Activated CD4-positive, alpha-beta memory T cell treated with anti-CD3 and anti-CD28 coated beads, Interleukin-2, amount 10 ng/mL, durations not matched to agents 7 days and 5 days (primary cell): ENCODE measurements at regions of chr1 and their contacts with region 1.

Region 1: GRCh38 chr1:66300972-66301451 is 232.9 kb upstream of the SGIP1 start:
- DNase-seq: peak; percentile 53
- H3K4me3 Mint-ChIP-seq: peak overlapping the region; percentile 76
- H3K27ac Mint-ChIP-seq: peak overlapping the region; percentile 85
- H3K4me1 Mint-ChIP-seq: peaks cover 49% of the 10 kb centered on the region
- H3K27me3 Mint-ChIP-seq: no peaks in the 10 kb centered on the region

Region 2: DNA sequence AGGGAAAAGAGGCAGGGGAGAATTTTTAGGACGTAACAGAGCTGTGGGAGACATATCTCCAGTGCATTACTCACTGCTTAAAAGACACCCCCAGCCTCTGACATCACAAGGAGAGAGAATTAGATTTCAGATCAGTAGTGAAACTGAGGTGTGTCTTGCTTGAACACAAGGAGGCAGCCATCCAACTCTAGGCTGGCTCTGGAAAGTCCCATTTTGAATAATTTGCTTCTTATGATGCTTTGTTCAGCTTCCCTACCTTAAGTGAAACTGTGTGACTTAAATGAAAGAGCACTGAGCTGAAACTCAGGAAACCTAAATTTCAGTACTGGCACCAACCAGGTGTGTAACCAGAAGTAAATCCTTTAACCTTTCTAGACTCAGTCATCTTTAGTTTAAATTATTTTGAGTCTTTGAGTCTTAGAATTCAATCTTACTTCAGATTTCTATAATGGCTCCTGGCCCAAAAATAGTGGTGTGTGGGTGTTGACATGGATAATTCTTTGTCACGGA is 18.6 kb before region 1 on chr1:
- CTCF ChIA-PET with region 1: interaction called, 10 read pairs
- POLR2A ChIA-PET with region 1: interaction called, 28 read pairs
- DNase-seq: peak; percentile 66
- H3K4me3 Mint-ChIP-seq: no peak overlapping the region
- H3K27ac Mint-ChIP-seq: peak overlapping the region; percentile 19
- H3K4me1 Mint-ChIP-seq: peaks cover 83% of the 10 kb centered on the region
- H3K27me3 Mint-ChIP-seq: no peaks in the 10 kb centered on the region